ENCODE measurements at regions of chr20 and their contacts with region 1.

Region 1: DNA sequence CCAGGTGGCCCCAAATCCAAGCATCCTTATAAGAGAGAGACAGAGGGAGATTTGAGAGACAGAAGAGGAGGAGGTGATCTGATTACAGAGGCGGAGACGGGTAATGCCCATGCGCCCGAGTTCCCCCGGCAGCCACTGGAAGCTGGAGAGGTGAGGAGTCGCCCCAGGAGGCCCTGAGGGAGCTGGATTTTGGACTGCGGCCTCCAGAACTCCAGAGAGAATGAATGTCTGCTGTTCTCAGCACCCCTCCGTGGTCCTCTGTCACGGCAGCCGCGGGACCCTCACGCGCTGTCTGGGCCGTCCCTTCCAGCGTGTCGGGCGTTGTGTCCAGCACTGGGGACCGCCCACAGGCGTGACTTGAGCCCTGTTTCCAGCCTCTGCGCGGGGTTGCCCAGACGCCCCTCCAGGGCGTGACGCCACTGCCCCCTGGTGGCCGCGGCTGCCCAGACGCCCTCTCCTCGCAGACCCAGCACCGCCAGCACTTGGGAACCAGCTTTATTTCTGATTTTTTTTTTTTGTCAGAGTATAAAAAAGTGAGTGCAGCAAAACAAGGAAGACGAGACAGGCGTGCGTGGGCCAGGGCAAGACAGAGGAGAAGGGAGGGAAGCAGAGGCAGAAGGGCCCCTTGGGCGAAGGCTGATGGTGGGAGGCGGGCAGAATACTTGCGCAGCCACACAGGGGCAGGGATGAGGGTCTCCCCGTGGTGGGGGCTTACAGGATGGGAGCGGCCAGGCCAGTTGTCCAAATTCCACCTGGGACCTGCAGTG is 4.1 kb upstream of the ZNF512B start:
- DNase-seq: peak; percentile 62
- ATAC-seq: peak; percentile 85
- H3K4me3 ChIP-seq: peak overlapping the region; percentile 43 to 55
- H3K27ac ChIP-seq: peak overlapping the region; percentile 31; the same call in 1 of the 2 replicates
- H3K4me1 ChIP-seq: peaks cover 20 to 48% of the 10 kb centered on the region in 2 experiments
- H3K27me3 ChIP-seq: no peaks in the 10 kb centered on the region
- CTCF ChIP-seq: peak in 2 of 3 experiments; percentile 95 to 97; a peak in 4 of 6 replicates
- POLR2A ChIP-seq: no peak
- RAD21 ChIP-seq: no peak

Region 2: GRCh38 chr20:63707549-63708300 is 266.1 kb before region 1 on chr20 and contains the starts of genes ARFRP1 and ZGPAT:
- CTCF ChIA-PET with region 1: interaction called, 4 read pairs
- POLR2A ChIA-PET with region 1: no interaction called
- RAD21 ChIA-PET with region 1: no interaction called
- intact Hi-C with region 1: loop called (anchors 1 kb)
- DNase-seq: peak; percentile 47
- ATAC-seq: peak; percentile 85
- H3K4me3 ChIP-seq: peak within 1 kb of the TSS; percentile 85 to 96
- H3K27ac ChIP-seq: peak within 1 kb of the TSS; percentile 95
- H3K4me1 ChIP-seq: peaks cover 13 to 23% of the 10 kb centered on the region in 2 experiments
- H3K27me3 ChIP-seq: no peaks in the 10 kb centered on the region
- CTCF ChIP-seq: no peak
- POLR2A ChIP-seq: peak; percentile 53
- RAD21 ChIP-seq: no peak
- total RNA-seq, gene ARFRP1: 53.7 TPM
- total RNA-seq, gene ZGPAT: 30.6 TPM

Region 3: GRCh38 chr20:63782051-63782471 is 191.8 kb before region 1 on chr20:
- CTCF ChIA-PET with region 1: no interaction called
- POLR2A ChIA-PET with region 1: no interaction called
- RAD21 ChIA-PET with region 1: interaction called in 1 of 2 experiments, 3 read pairs
- intact Hi-C with region 1: loop called (anchors 10 kb)
- DNase-seq: peak; percentile 63
- ATAC-seq: peak; percentile 88
- H3K4me3 ChIP-seq: no peak overlapping the region
- H3K27ac ChIP-seq: peak overlapping the region; percentile 52
- H3K4me1 ChIP-seq: peaks cover 29 to 36% of the 10 kb centered on the region in 2 experiments
- H3K27me3 ChIP-seq: no peaks in the 10 kb centered on the region
- CTCF ChIP-seq: peak; percentile 39 to 48 (median 46); a peak in 5 of 6 replicates
- POLR2A ChIP-seq: no peak
- RAD21 ChIP-seq: peak; percentile 40

Region 4: DNA sequence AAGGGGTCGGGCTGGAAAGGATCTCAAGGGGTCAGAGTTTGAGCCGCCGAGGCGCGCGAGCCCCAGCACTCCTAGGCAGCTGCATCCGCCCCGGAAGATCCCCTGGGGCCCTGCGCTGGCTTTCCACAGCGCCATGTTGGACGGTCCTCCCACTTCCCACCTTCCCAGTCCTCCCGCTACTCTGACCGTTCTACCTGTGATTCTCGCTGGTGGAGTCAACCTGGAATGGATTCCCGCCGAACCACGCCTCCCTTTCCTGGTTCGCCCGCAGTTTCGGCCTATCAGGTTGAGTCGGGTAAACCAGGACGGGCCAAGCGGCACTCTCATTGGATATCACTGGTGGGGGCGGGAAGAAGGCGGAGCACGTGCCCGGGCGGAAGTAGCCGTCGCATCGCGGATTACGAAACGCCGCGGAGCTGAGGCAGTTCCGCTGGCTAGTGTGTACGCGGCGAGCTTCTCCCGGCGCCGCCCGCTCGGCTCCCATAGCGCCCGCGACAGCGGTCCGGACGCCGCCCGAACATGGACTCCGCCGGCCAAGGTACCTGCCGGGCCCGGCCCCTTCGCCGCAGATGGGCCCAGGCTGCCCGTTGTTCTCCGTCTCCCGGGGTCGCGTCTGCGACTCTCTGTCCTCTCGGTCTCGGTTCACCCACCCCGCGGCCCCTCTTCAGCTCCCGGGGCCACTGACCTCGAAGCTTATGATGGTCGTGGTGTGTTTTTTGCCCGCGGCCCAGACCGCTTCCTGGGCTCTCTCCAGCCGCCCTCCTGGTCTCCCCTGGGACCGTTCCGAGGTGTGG is 108.8 kb before region 1 on chr20 and contains the start of gene TPD52L2:
- CTCF ChIA-PET with region 1: interaction called, 13 read pairs
- POLR2A ChIA-PET with region 1: interaction called, 3 read pairs
- RAD21 ChIA-PET with region 1: no interaction called
- intact Hi-C with region 1: loop called (anchors 10 kb)
- DNase-seq: peak; percentile 100
- ATAC-seq: peak; percentile 82
- H3K4me3 ChIP-seq: peak within 1 kb of the TSS; percentile 98 to 100
- H3K27ac ChIP-seq: peak within 1 kb of the TSS; percentile 95
- H3K4me1 ChIP-seq: peaks cover 14 to 19% of the 10 kb centered on the region in 2 experiments
- H3K27me3 ChIP-seq: no peaks in the 10 kb centered on the region
- CTCF ChIP-seq: no peak
- POLR2A ChIP-seq: peak; percentile 77
- RAD21 ChIP-seq: no peak
- total RNA-seq, gene TPD52L2: 149 TPM

Region 5: GRCh38 chr20:63911176-63911575 is 62.6 kb before region 1 on chr20:
- CTCF ChIA-PET with region 1: interaction called, 3 read pairs
- POLR2A ChIA-PET with region 1: no interaction called
- RAD21 ChIA-PET with region 1: no interaction called
- intact Hi-C with region 1: loop called (anchors 1 kb)
- DNase-seq: peak; percentile 12
- ATAC-seq: 0 out of 2 replicates have a peak, but pooled peaks have one; percentile 35
- H3K4me3 ChIP-seq: no peak overlapping the region
- H3K27ac ChIP-seq: peak overlapping the region; percentile 22; the same call in 1 of the 2 replicates
- H3K4me1 ChIP-seq: peaks cover 4 to 38% of the 10 kb centered on the region in 2 experiments; a peak in 3 of 4 replicates
- H3K27me3 ChIP-seq: no peaks in the 10 kb centered on the region
- CTCF ChIP-seq: no peak
- POLR2A ChIP-seq: no peak
- RAD21 ChIP-seq: no peak

Region 6: DNA sequence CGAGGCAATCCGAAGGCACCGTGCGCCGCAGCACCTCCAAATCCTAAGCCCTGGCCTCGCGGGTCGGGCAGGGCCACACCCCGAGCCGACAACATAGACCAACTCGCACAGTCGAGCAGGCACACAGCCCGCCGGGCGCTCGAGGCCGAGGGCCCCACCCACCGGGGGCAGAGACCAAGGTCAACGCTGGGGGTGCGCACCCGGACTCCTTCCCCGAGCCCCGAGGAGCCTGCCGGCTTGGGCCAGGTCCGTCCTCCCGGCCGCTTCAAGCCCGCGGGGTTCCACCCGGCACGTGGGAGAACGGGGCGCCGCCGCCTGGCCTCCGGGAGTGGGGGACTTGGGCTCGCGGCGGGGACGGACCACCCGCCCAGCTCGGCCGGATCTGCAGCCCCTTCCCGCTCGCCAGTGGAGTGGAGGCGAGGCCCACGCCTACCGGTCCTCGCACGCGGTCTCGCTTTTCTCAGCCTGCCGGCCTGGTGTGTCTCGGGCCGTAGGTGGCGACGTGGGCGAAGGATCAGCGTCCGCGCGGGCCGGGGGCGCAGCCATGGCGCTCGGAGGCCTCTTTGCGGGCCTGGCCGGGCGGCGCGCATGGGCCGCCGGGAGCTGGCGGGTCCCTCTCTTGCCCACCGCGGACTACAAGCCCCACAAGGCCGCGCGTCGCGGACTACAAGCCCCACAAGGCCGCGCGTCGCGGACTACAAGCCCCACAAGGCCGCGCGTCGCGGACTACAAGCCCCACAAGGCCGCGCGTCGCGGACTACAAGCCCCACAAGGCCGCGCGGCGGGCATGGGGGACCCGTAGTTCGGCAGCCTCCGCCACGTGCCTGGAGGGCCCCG is 17.8 kb before region 1 on chr20 and contains the start of gene UCKL1:
- CTCF ChIA-PET with region 1: interaction called, 12 read pairs
- POLR2A ChIA-PET with region 1: no interaction called
- RAD21 ChIA-PET with region 1: interaction called in 1 of 2 experiments, 3 read pairs
- intact Hi-C with region 1: no loop called
- DNase-seq: peak; percentile 79
- ATAC-seq: peak; percentile 75
- H3K4me3 ChIP-seq: peak within 1 kb of the TSS; percentile 90 to 96
- H3K27ac ChIP-seq: peak within 1 kb of the TSS; percentile 99
- H3K4me1 ChIP-seq: peaks cover 17 to 60% of the 10 kb centered on the region in 2 experiments; a peak in 3 of 4 replicates
- H3K27me3 ChIP-seq: no peaks in the 10 kb centered on the region
- CTCF ChIP-seq: no peak
- POLR2A ChIP-seq: no peak
- RAD21 ChIP-seq: no peak
- total RNA-seq, gene UCKL1: 54.2 TPM